ENCODE measurements at regions of chr1 and their contacts with region 1.

Region 1: DNA sequence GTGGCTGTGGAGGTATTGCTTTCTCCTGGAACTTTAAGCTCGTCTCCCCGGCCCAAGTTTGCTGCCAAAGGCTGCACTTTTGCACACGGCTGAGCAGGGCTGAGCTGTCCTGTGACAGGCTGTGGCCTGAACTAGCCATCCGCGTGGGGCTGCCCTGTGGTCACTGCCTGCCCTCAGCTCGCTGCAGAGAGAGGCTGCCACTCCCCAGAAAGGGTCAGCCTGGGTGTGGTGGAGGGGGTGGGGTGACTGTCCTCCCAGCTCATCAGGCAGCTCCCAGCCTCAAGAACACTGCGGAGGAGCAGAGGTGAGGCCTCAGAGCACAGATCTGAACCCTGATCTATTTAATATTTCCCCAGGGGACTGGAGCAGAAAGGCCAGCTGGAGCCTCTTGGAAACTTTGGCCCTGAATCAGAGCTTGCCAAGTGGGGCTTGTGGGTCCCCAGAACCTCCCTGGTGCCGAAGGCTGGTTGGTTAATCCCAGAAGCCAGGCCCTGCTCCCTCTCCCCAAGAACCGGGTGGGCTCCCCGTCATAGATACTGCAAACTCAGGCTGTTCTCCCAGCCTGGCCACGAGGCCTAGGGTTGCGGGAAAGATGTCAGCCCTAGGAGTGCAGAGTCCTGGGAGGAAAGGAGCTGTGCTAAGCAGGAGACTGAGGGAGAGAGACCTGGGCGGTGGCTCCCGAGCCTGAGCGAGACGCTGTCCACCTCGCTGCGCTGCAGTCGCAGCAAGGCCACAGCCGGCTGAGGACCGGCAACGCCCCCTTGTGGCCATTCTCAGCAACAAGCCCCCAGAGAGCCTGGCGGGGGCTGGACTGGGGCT is 125.1 kb upstream of the IPO9 start:
- DNase-seq: no peak
- H3K4me3 ChIP-seq: no peak overlapping the region
- CTCF ChIP-seq: peak; percentile 94

Region 2: DNA sequence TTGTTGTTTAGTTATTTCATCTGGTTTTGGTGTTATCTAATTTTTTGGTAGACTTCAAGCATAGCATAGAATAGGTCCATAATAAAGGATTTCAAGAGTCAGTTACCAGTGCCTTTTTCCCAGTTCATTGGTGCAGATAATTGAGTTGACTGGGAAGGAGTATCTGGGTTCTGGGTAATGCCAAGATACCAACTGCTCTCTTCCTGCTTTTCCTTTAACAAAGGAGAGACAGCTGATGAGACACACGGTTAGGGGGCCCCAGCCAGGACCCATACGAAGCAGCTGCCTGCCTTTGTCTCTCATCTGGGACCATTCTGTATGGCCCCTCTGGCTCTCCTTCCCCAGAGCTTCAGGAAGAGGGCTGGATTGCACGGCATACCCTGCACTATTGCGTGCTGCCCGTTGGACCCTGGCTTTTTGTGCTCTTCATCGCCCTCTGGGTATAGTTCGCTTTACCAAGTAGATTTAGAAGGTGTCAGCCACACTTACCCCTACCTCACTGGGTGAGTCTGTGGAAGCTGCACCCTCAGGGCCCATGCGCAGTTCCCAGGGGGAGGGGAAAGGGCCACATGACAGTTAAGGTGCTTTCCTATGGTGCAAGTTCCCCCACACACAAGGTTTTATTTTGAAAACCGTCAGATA is 157.9 kb before region 1 on chr1:
- CTCF ChIA-PET with region 1: interaction called, 15 read pairs
- POLR2A ChIA-PET with region 1: no interaction called
- DNase-seq: no peak
- H3K4me3 ChIP-seq: no peak overlapping the region
- CTCF ChIP-seq: no peak

Region 3: GRCh38 chr1:201649761-201650622 is 53.8 kb before region 1 on chr1:
- CTCF ChIA-PET with region 1: interaction called, 44 read pairs
- POLR2A ChIA-PET with region 1: interaction called, 4 read pairs
- DNase-seq: no peak
- H3K4me3 ChIP-seq: peak overlapping the region; percentile 79
- CTCF ChIP-seq: no peak

Region 4: GRCh38 chr1:201665036-201665435 is 38.8 kb before region 1 on chr1:
- CTCF ChIA-PET with region 1: interaction called, 12 read pairs
- POLR2A ChIA-PET with region 1: no interaction called
- DNase-seq: no peak
- H3K4me3 ChIP-seq: no peak overlapping the region
- CTCF ChIP-seq: no peak

Region 5: DNA sequence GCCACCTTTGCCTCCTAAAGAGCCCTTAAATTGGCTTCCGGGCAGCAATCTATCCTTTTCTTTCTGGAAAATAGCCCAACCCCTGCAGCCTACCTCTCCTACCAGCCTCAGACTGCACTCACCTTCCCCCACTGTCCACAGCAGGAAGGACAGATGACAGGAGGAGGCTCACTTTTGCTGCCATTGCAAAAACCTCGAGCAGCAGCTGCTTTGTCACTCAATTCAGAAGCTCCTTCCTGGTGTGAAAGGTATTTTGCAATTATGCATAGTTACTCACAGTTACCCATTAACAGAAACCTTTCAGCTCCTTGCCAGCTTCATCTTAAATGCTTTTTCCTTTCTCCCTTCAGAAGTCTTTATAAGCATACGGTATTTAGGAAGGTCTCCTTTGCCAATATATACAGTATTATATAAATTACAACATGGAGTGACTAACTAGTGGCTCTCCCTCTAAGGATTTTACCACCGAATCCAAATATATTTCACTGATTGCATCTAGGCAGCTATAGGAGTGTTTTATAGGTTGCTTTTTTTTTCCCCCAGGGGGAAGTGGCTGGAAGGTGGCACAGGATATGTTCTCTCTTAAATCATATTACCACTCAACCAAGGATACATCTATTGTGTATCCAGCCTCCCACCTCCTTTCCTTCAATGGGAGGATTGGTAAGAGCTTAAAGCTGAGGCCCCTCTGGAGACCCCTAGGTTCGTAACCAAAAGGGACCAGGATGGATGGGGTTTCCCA is 16.9 kb before region 1 on chr1:
- CTCF ChIA-PET with region 1: interaction called, 18 read pairs
- POLR2A ChIA-PET with region 1: no interaction called
- DNase-seq: no peak
- H3K4me3 ChIP-seq: no peak overlapping the region
- CTCF ChIP-seq: no peak

Measured in AG04449 (cell line).